Activated CD4-positive, alpha-beta T cell treated with anti-CD3 and anti-CD28 coated beads for 36 hours (primary cell): ENCODE measurements at regions of chr1 and their contacts with region 1.

Region 1: GRCh38 chr1:2556277-2556677 is at the start of gene TNFRSF14:
- DNase-seq: peak; percentile 85
- ATAC-seq: peak; percentile 61
- H3K4me3 Mint-ChIP-seq: peak within 1 kb of the TSS; percentile 98
- H3K27ac Mint-ChIP-seq: peak within 1 kb of the TSS; percentile 98
- H3K4me1 Mint-ChIP-seq: peaks cover 36% of the 10 kb centered on the region
- H3K27me3 Mint-ChIP-seq: no peaks in the 10 kb centered on the region
- total RNA-seq, gene TNFRSF14: 135 to 145 TPM

Region 2: GRCh38 chr1:2499986-2500596 is 56.2 kb before region 1 on chr1:
- CTCF ChIA-PET with region 1: no interaction called
- POLR2A ChIA-PET with region 1: no interaction called
- intact Hi-C with region 1: no loop called
- DNase-seq: peak; percentile 35
- ATAC-seq: peak; percentile 47
- H3K4me3 Mint-ChIP-seq: no peak overlapping the region
- H3K27ac Mint-ChIP-seq: peak overlapping the region; percentile 37
- H3K4me1 Mint-ChIP-seq: peaks cover 12% of the 10 kb centered on the region
- H3K27me3 Mint-ChIP-seq: no peaks in the 10 kb centered on the region

Region 3: DNA sequence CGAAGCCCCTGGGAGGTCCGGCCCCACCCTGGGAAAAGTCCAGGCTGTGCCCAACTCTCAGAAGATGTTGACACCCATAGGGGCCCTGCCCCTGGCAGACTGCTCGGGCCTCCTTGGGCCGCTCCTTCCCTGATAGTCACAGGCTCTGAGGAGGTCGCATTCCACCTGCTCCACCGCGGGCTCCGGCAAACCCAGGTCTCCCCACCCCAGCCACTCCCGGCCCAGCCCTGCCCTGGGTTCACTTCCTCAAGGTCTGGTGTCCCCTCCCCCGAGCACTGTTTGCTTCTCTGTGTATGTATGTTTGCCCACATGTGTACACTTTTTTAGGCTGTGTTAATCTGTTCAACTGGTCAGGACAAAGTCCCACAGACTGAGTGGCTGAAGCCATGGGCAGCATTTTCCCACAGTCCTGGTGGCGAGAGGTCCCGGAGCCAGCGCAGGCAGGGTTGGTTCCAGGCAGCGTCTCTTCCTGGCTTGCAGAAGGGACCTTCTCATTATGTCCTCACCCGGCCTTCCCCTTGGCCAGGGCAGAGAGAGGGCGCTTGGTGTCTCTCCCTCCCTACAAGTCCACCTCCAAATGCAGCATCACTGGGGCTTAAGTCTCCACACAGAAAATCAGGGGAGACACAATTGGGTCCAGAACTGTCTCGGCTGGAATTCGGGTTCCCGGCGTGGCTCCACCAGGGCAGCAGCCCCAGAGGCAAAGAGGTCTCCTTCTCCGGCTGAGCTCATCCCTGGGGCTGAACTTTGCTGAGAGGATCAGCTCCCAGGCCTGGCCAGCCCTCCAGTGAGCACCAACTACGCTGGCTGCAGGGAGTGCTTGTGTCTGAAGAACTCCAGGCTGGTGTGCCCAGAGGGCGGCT is 19.8 kb after region 1 on chr1:
- CTCF ChIA-PET with region 1: interaction called, 4 read pairs
- POLR2A ChIA-PET with region 1: interaction called, 12 read pairs
- intact Hi-C with region 1: loop called (anchors 1 kb)
- DNase-seq: no peak
- ATAC-seq: no peak
- H3K4me3 Mint-ChIP-seq: peak overlapping the region; percentile 62
- H3K27ac Mint-ChIP-seq: peak overlapping the region; percentile 98
- H3K4me1 Mint-ChIP-seq: peaks cover 43% of the 10 kb centered on the region
- H3K27me3 Mint-ChIP-seq: no peaks in the 10 kb centered on the region

Region 4: DNA sequence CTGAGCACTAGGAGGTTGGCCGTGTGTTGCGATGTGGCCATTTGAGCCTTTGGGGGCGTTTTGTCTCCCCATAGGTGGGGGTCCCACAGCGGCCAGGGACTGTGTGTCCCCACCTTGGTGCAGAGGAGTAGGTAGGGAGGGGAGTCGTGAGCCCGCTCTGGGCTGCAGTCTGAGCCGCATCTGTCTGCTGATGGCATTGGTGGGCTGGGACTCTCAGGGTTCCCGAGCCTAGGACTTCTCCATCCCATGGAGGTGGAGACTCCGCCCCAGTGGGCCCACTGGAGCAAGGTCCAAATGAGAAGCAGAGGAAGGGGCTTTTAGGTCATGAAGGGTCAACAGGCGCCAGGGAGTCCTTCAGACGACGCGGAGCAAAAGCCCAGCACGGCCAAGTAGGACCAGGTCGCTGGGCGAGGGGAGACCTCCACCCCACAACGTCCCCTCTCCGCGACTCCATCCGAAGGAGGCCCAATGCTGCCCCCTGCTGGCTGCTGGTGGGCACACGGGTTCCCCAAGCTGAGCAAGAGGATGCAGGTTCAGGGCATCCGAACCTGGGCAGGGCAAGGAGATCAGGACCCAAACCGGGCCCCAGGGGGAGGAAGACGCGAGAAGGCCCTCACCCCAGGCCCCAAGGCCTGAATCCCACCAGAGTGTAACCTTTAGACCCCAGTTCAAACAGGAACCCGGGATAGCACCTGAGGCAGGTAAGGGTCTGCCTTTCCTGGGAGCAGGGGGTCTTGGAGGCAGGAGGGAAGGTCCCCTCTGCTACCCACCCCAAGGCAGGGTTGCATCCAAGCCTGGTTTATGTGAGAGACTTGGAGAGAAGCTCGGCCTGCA is 230.3 kb after region 1 on chr1:
- CTCF ChIA-PET with region 1: no interaction called
- POLR2A ChIA-PET with region 1: no interaction called
- intact Hi-C with region 1: loop called in 1 of 2 experiments (anchors 5 kb)
- DNase-seq: peak; percentile 85
- ATAC-seq: peak; percentile 74
- H3K4me3 Mint-ChIP-seq: no peak overlapping the region
- H3K27ac Mint-ChIP-seq: no peak overlapping the region
- H3K4me1 Mint-ChIP-seq: peaks cover 8% of the 10 kb centered on the region
- H3K27me3 Mint-ChIP-seq: peaks cover 29% of the 10 kb centered on the region